GM12878 (cell line): ENCODE measurements at regions of chr2 and their contacts with region 1.

Region 1: GRCh38 chr2:56132138-56132537 is 51.7 kb upstream of the CCDC85A start:
- DNase-seq: no peak
- ATAC-seq: peak; percentile 47; the same call in 1 of the 3 replicates
- H3K4me3 ChIP-seq: no peak overlapping the region
- H3K27ac ChIP-seq: no peak overlapping the region
- H3K4me1 ChIP-seq: no peaks in the 10 kb centered on the region
- H3K27me3 ChIP-seq: no peaks in the 10 kb centered on the region
- CTCF ChIP-seq: peak; percentile 20 to 42 (median 40); a peak in 2 of 6 replicates
- EP300 ChIP-seq: no peak
- POLR2A ChIP-seq: no peak
- RAD21 ChIP-seq: peak; percentile 64

Region 2: GRCh38 chr2:56077352-56077915 is 54.7 kb before region 1 on chr2:
- CTCF ChIA-PET with region 1: no interaction called
- POLR2A ChIA-PET with region 1: no interaction called
- RAD21 ChIA-PET with region 1: no interaction called
- SMC1A ChIA-PET with region 1: no interaction called
- in situ Hi-C with region 1: no loop called
- intact Hi-C with region 1: loop called (anchors 1 kb)
- DNase-seq: no peak
- ATAC-seq: no peak
- H3K4me3 ChIP-seq: no peak overlapping the region
- H3K27ac ChIP-seq: no peak overlapping the region
- H3K4me1 ChIP-seq: no peaks in the 10 kb centered on the region
- H3K27me3 ChIP-seq: no peaks in the 10 kb centered on the region
- CTCF ChIP-seq: peak; percentile 27 to 42 (median 39); a peak in 4 of 6 replicates
- EP300 ChIP-seq: no peak
- POLR2A ChIP-seq: no peak
- RAD21 ChIP-seq: peak; percentile 29

Region 3: DNA sequence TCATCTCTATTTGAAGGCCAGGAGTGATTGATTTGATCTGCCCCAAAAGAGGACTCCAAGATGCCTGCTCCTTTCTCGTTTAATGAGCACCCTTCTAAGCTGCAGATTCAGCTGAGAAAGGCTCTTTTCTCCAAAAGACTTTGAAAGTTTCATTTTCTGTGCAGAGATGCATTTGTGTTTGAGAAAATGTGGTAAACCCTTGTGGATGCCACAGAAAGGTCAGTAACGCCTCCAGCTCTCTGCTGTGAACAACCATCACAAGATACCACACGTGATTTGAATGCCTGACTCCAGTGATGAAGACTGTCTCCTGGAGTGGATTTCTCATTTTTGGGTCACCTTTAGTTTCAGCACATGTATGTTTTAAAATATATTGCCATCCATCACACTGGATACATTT is 16.7 kb after region 1 on chr2:
- CTCF ChIA-PET with region 1: no interaction called
- POLR2A ChIA-PET with region 1: no interaction called
- RAD21 ChIA-PET with region 1: no interaction called
- SMC1A ChIA-PET with region 1: no interaction called
- in situ Hi-C with region 1: no loop called
- intact Hi-C with region 1: no loop called
- DNase-seq: no peak
- ATAC-seq: no peak
- H3K4me3 ChIP-seq: no peak overlapping the region
- H3K27ac ChIP-seq: no peak overlapping the region
- H3K4me1 ChIP-seq: no peaks in the 10 kb centered on the region
- H3K27me3 ChIP-seq: no peaks in the 10 kb centered on the region
- CTCF ChIP-seq: no peak
- EP300 ChIP-seq: no peak
- POLR2A ChIP-seq: no peak
- RAD21 ChIP-seq: no peak